Heart right ventricle (tissue), 16 donors: ENCODE measurements at regions of chr12 and their contacts with region 1.

Region 1: GRCh38 chr12:48157018-48157888 is at the start of gene ASB8:
- DNase-seq: peak; percentile 99
- ATAC-seq: peak; percentile 97 to 99 (median 99)
- H3K4me3 ChIP-seq: peak within 1 kb of the TSS; percentile 63 to 99 (median 80)
- H3K27ac ChIP-seq: peak within 1 kb of the TSS; percentile 19 to 95 (median 89)
- H3K4me1 ChIP-seq: peaks cover 0 to 49% (median 28%) of the 10 kb centered on the region in 9 donors
- H3K27me3 ChIP-seq: no peaks in the 10 kb centered on the region
- CTCF ChIP-seq: peak in 8 of 9 donors; percentile 33 to 73 (median 53)
- total RNA-seq, gene ASB8: 73.4 to 103 (median 85.8) TPM

Region 2: GRCh38 chr12:47651368-47652254 is 505.6 kb before region 1 on chr12:
- intact Hi-C with region 1: loop called in 1 of 10 experiments (anchors 10 kb)
- DNase-seq: peak; percentile 23 to 34
- ATAC-seq: peak; percentile 83 to 91 (median 88)
- H3K4me3 ChIP-seq: peak overlapping the region in 4 of 10 donors; percentile 9 to 19 (median 12)
- H3K27ac ChIP-seq: peak overlapping the region in 1 of 10 donors; percentile 26
- H3K4me1 ChIP-seq: peaks cover 0 to 23% (median 13%) of the 10 kb centered on the region in 9 donors
- H3K27me3 ChIP-seq: no peaks in the 10 kb centered on the region
- CTCF ChIP-seq: peak; percentile 56 to 83 (median 74)

Region 3: DNA sequence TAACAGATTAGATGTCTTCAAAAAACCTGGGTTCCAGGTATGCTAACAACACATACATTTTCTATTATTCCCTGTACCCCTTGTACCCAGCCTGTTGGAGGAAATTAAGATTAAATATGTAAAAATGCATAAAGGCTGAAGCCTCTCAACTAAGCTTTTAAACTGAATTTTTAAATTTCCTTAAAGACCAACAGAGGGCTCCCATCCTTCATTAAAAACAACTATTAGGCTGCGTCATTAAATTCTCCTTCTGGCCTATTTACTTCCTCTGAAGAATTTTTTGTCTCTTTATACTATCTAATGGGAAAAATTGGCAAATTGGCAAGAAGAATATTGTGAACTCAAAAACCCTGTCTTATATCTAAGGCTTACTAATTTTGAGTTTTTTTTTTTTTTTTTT is 73.2 kb before region 1 on chr12:
- intact Hi-C with region 1: loop called in 6 of 10 experiments (anchors 2 to 5 kb)
- DNase-seq: no peak
- ATAC-seq: peak in 3 of 8 donors; percentile 26 to 54 (median 51)
- H3K4me3 ChIP-seq: no peak overlapping the region
- H3K27ac ChIP-seq: no peak overlapping the region
- H3K4me1 ChIP-seq: peaks cover 0 to 1% (median 0%) of the 10 kb centered on the region in 9 donors
- H3K27me3 ChIP-seq: no peaks in the 10 kb centered on the region
- CTCF ChIP-seq: peak in 7 of 9 donors; percentile 25 to 64 (median 53)

Region 4: GRCh38 chr12:48105862-48106680 is 51.2 kb before region 1 on chr12 and contains the start of gene SENP1:
- intact Hi-C with region 1: loop called in 6 of 10 experiments (anchors 1 to 10 kb)
- DNase-seq: peak; percentile 89 to 91
- ATAC-seq: peak; percentile 94 to 98 (median 97)
- H3K4me3 ChIP-seq: peak within 1 kb of the TSS; percentile 71 to 99 (median 90)
- H3K27ac ChIP-seq: peak within 1 kb of the TSS; percentile 91 to 99 (median 97)
- H3K4me1 ChIP-seq: peaks cover 0 to 24% (median 19%) of the 10 kb centered on the region in 9 donors
- H3K27me3 ChIP-seq: no peaks in the 10 kb centered on the region
- CTCF ChIP-seq: peak in 6 of 9 donors; percentile 17 to 49 (median 34)
- total RNA-seq, gene SENP1: 7.1 to 10.7 (median 8.7) TPM

Region 5: DNA sequence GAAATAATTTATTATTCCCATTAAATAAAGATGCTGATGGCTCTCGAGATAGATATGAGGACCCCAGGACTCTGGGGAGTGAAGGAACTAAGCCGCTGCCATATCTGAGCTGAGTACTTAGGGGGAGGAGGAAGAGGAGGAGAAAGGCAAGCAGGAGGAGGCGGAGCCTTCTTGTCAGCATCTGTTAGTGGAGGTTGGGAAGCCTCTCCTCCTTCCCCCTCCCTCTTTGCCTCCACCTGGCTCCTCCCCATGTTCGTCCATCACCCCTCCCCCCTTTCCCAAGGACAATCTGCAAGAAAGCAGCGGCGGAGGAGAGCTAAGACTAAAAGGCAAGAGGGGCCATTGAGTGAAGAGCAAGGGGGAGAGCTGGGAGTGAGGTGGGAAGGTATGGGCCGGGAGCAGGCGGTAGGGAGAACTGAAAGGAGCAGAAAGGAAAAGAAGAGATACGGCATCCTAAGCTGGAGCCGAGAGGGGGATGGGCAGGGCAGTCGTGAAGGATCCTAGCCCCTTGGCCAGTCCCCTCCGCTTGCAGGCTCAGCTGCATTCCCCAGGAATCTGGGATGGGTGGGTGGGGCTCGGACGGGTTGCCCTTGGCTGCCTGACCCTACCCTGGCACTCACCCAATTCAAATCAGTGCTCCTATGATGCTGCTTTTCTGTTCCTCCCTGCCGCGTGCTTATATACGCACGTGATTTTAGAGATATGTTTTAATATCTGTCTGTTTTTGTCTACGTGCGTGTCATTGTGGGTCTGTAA is 38.0 kb before region 1 on chr12 and contains the start of gene PFKM:
- intact Hi-C with region 1: loop called in 4 of 10 experiments (anchors 1 to 5 kb)
- DNase-seq: peak; percentile 67 to 91
- ATAC-seq: peak; percentile 95 to 98 (median 96)
- H3K4me3 ChIP-seq: peak within 1 kb of the TSS; percentile 53 to 83 (median 70)
- H3K27ac ChIP-seq: peak within 1 kb of the TSS; percentile 28 to 90 (median 84)
- H3K4me1 ChIP-seq: peaks cover 0 to 37% (median 9%) of the 10 kb centered on the region in 9 donors
- H3K27me3 ChIP-seq: no peaks in the 10 kb centered on the region
- CTCF ChIP-seq: no peak
- total RNA-seq, gene PFKM: 508 to 948 (median 694) TPM

Region 6: DNA sequence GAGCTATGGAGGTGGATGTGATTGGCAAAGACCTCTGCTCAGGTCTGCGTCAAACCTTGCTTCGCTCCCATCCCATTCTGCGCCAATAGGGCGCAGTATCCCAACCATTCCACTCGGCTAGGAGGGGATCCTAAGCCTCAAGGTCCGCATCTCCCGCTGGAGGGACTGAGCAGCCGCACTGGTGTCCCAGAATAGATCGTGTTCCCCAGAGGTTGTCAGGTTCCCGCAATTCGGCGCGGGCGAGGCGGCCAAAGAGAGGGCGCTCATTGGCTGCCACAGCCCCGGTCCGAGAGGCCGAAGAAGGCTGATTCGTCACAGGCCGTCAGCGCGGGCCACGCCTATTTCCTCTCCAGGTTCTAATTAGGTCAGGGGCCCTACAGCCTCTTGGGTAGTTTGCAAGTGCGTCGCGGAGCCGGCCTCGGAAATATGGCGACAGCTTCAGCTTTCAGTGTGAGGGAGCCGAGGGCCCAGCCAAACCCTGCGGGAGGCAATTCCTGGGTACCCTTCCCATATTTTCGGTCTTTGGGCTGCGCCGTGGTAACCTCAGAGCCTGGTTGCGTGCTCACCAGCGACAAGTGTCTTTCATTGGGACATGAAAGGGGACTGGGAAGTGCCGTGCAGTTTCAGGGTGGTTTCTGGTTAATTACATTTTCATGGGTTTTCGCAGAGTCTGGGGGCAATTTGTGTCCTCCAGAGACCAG is 40.9 kb after region 1 on chr12:
- intact Hi-C with region 1: loop called in 1 of 10 experiments (anchors 1 kb)
- DNase-seq: peak; percentile 97 to 98
- ATAC-seq: peak; percentile 98 to 100 (median 100)
- H3K4me3 ChIP-seq: peak overlapping the region; percentile 38 to 97 (median 75)
- H3K27ac ChIP-seq: peak overlapping the region; percentile 89 to 100 (median 100)
- H3K4me1 ChIP-seq: peaks cover 0 to 36% (median 23%) of the 10 kb centered on the region in 9 donors
- H3K27me3 ChIP-seq: peaks cover 0 to 3% (median 0%) of the 10 kb centered on the region in 7 donors
- CTCF ChIP-seq: no peak